ENCODE measurements at regions of chr11 and their contacts with region 1.

Region 1: GRCh38 chr11:68266121-68266891 is 5.5 kb downstream of the C11orf24 start:
- DNase-seq: no peak
- H3K4me3 ChIP-seq: no peak overlapping the region
- H3K27ac ChIP-seq: no peak overlapping the region
- H3K4me1 ChIP-seq: peaks cover 22% of the 10 kb centered on the region
- H3K27me3 ChIP-seq: no peaks in the 10 kb centered on the region

Region 2: GRCh38 chr11:68146704-68147474 is 119.4 kb before region 1 on chr11:
- in situ Hi-C with region 1: no loop called
- DNase-seq: peak; percentile 38
- H3K4me3 ChIP-seq: no peak overlapping the region
- H3K27ac ChIP-seq: no peak overlapping the region
- H3K4me1 ChIP-seq: no peaks in the 10 kb centered on the region
- H3K27me3 ChIP-seq: no peaks in the 10 kb centered on the region

Region 3: DNA sequence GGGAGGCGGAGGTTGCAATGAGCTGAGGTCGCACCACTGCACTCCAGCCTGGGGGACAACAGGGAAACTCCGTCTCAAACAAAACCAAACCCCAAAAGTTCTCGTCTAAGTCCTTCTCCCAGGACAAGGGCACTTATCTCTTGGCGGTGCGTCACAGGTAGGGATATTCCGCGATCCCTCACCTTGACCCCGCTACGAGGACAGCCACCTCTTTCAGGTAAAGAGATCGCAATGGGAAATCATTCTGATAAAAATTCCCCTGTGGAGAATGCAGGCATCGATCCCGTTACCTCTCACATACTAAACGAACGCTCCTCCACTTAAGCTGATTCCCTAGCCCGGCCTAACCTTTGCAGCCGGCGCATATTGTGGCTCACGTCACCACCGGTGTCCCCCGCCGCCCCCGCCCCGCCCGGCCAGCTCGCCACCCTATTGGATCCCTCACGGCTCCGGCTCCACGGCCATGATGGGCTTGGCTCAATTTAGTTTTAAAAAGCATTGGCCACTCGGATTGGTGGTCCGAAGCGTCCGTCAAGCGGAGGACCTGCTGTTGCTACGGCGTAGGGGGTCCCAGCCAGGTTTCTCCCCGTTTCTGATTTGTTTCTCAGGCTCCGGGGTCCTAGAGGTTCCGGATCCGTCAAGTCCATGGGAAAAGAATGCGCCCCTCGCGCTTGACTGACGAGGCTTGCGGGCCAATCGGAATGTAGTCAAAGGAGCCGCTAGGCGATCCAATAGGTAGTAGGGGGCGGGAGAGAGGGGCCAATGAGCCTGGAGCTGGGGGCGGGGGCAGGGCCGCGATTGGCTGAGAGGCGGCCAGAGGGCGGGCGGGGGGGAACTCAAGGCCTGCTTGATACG is 193.8 kb after region 1 on chr11:
- in situ Hi-C with region 1: loop called (anchors 10 kb)
- DNase-seq: peak; percentile 100
- H3K4me3 ChIP-seq: peak overlapping the region; percentile 90
- H3K27ac ChIP-seq: peak overlapping the region; percentile 94
- H3K4me1 ChIP-seq: peaks cover 21% of the 10 kb centered on the region
- H3K27me3 ChIP-seq: no peaks in the 10 kb centered on the region

Measured in GM23248 (cell line).